HEK293 (cell line): ENCODE measurements at regions of chr16 and their contacts with region 1.

Region 1: DNA sequence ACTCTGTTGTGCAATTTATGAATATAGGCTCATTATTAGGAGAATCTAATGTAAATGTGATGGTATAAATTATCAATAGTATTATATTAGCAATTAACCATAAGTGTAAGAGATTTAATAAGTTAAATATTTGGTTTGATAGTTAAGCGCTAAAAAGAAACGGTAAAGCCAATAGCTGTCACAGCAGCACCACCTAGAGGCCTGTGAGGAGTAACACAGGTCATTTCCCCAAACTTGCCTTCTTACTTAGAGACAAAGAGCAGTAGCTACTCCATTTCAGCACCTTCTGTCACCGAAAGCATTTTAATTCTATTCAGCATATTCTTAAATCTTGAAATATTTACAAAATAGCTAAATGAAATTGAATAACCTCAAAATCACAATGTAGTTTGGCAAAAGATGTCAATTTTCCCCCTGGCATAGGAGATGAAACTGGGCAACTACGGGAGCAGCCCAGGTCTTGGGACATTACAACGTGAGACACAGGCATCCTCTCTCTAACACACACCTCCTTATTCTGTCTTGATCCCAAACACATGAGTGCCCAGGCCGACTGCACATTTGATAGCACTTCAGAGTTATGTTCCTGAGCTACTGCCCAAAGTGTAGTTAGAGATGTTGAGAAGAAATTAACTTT is 14.2 kb upstream of the DYNLRB2 start:
- H3K4me3 ChIP-seq: no peak overlapping the region
- H3K27ac ChIP-seq: no peak overlapping the region
- H3K4me1 ChIP-seq: no peaks in the 10 kb centered on the region
- CTCF ChIP-seq: peak; percentile 54

Region 2: GRCh38 chr16:80500526-80500925 is 26.0 kb before region 1 on chr16:
- CTCF ChIA-PET with region 1: interaction called, 13 read pairs
- POLR2A ChIA-PET with region 1: no interaction called
- H3K4me3 ChIP-seq: no peak overlapping the region
- H3K27ac ChIP-seq: no peak overlapping the region
- H3K4me1 ChIP-seq: no peaks in the 10 kb centered on the region
- CTCF ChIP-seq: no peak

Region 3: GRCh38 chr16:80540516-80541272 is 14.2 kb after region 1 on chr16 and contains the start of gene DYNLRB2:
- CTCF ChIA-PET with region 1: interaction called, 25 read pairs
- POLR2A ChIA-PET with region 1: no interaction called
- H3K4me3 ChIP-seq: peak within 1 kb of the TSS; percentile 58
- H3K27ac ChIP-seq: peak within 1 kb of the TSS; percentile 39
- H3K4me1 ChIP-seq: no peaks in the 10 kb centered on the region
- CTCF ChIP-seq: peak; percentile 26; the same call in 1 of the 2 replicates

Region 4: GRCh38 chr16:80564394-80564793 is 37.9 kb after region 1 on chr16:
- CTCF ChIA-PET with region 1: no interaction called
- POLR2A ChIA-PET with region 1: no interaction called
- H3K4me3 ChIP-seq: no peak overlapping the region
- H3K27ac ChIP-seq: no peak overlapping the region
- H3K4me1 ChIP-seq: peaks cover 4% of the 10 kb centered on the region
- CTCF ChIP-seq: no peak

Region 5: GRCh38 chr16:80580109-80580832 is 53.7 kb after region 1 on chr16:
- CTCF ChIA-PET with region 1: no interaction called
- POLR2A ChIA-PET with region 1: no interaction called
- H3K4me3 ChIP-seq: no peak overlapping the region
- H3K27ac ChIP-seq: no peak overlapping the region
- H3K4me1 ChIP-seq: peaks cover 7% of the 10 kb centered on the region
- CTCF ChIP-seq: no peak

Region 6: GRCh38 chr16:80816365-80816764 is 289.8 kb after region 1 on chr16:
- CTCF ChIA-PET with region 1: interaction called, 15 read pairs
- POLR2A ChIA-PET with region 1: no interaction called
- H3K4me3 ChIP-seq: no peak overlapping the region
- H3K27ac ChIP-seq: no peak overlapping the region
- H3K4me1 ChIP-seq: no peaks in the 10 kb centered on the region
- CTCF ChIP-seq: no peak

Region 7: GRCh38 chr16:80846275-80847010 is 319.9 kb after region 1 on chr16:
- CTCF ChIA-PET with region 1: interaction called, 37 read pairs
- POLR2A ChIA-PET with region 1: no interaction called
- H3K4me3 ChIP-seq: no peak overlapping the region
- H3K27ac ChIP-seq: no peak overlapping the region
- H3K4me1 ChIP-seq: no peaks in the 10 kb centered on the region
- CTCF ChIP-seq: no peak